Activated CD4-positive, alpha-beta memory T cell treated with anti-CD3 and anti-CD28 coated beads for 36 hours (primary cell): ENCODE measurements at regions of chr1 and their contacts with region 1.

Region 1: GRCh38 chr1:200279810-200280411 is 129.9 kb downstream of the ZNF281 start:
- DNase-seq: peak; percentile 40
- H3K4me3 Mint-ChIP-seq: no peak overlapping the region
- H3K27ac Mint-ChIP-seq: no peak overlapping the region
- H3K4me1 Mint-ChIP-seq: no peaks in the 10 kb centered on the region
- H3K27me3 Mint-ChIP-seq: no peaks in the 10 kb centered on the region

Region 2: DNA sequence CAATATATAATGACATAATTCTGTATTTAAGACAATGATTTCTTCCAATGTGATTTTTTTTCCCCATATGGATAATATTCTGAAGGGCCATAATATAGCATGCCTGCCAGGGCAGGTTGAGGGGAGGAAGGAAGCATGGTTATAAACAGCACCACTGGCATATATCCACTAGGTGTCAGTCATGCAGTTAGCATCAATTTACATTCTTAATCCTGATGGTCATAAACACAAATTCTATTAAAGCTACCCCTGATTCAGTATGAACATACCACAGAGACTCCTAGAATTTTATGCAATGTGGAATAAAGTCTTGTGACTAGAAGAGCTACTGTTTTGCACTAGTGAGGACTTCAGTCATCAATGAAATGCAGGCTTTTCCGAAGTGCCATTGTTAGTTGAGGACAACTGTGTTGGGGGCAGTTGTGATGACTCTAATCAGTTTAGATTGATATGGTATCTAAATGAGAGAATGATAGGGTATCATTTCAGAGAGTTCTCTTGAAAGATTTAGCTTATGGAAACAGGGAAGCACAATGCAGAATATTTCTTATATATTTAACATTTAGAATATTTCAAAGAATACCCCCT is 595.1 kb before region 1 on chr1:
- CTCF ChIA-PET with region 1: interaction called, 3 read pairs
- POLR2A ChIA-PET with region 1: no interaction called
- intact Hi-C with region 1: loop called (anchors 10 kb)
- DNase-seq: peak; percentile 13
- H3K4me3 Mint-ChIP-seq: no peak overlapping the region
- H3K27ac Mint-ChIP-seq: no peak overlapping the region
- H3K4me1 Mint-ChIP-seq: no peaks in the 10 kb centered on the region
- H3K27me3 Mint-ChIP-seq: peaks cover 1% of the 10 kb centered on the region

Region 3: DNA sequence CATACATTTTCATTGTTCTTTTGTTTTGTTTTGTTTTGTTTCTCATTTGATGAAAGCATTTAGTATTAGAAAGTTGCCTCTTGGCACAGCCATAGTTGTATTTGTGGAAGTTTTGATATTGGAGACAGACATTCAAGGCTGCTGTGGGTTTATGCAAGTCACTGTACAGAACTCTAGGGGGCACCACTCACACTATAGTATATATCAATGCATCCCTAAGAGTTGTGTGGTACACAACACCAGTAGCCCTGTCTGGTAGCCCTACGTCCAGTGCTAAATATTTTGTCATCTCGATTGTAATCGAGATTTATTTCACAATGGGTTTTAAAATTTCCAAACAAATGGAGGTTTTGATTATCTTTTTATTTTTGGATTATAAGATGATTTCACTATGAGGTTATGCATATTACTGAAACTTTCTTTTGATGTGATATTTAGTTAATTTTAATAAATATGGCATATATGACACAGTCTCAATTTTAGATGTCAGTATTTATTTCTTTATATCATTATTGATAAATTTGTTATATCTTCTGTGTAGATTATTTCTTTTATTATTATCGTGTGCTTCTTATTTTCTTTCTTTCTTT is 140.2 kb before region 1 on chr1:
- CTCF ChIA-PET with region 1: interaction called, 11 read pairs
- POLR2A ChIA-PET with region 1: no interaction called
- intact Hi-C with region 1: loop called (anchors 1 kb)
- DNase-seq: peak; percentile 27
- H3K4me3 Mint-ChIP-seq: no peak overlapping the region
- H3K27ac Mint-ChIP-seq: no peak overlapping the region
- H3K4me1 Mint-ChIP-seq: no peaks in the 10 kb centered on the region
- H3K27me3 Mint-ChIP-seq: no peaks in the 10 kb centered on the region

Region 4: DNA sequence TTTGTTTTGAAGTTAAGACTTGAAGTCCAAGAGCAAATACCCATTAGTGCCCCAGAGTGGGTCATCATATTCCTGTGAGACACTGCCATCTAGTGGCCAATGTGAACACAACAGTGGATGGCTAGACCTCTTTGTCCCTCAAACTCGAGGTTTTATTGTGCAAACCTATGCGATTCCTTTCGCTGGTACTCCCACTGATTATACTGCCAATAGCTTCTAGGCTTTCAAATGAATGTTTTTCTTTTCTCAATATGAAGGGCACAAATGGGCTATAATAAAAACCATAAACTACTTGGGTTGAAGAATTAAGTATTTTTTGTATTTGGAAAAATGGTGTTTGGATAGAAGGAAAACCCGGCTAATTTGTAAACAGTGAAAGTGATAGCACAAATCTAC is 230.3 kb after region 1 on chr1:
- CTCF ChIA-PET with region 1: interaction called, 12 read pairs
- POLR2A ChIA-PET with region 1: no interaction called
- intact Hi-C with region 1: loop called (anchors 1 kb)
- DNase-seq: peak; percentile 75
- H3K4me3 Mint-ChIP-seq: no peak overlapping the region
- H3K27ac Mint-ChIP-seq: no peak overlapping the region
- H3K4me1 Mint-ChIP-seq: peaks cover 2% of the 10 kb centered on the region
- H3K27me3 Mint-ChIP-seq: peaks cover 5% of the 10 kb centered on the region